IMR-90 (cell line): ENCODE measurements at regions of chr7 and their contacts with region 1.

Region 1: GRCh38 chr7:106659963-106660861 is 746 bp downstream of the CCDC71L start:
- DNase-seq: peak; percentile 74
- ATAC-seq: peak; percentile 60
- H3K4me3 ChIP-seq: peak overlapping the region; percentile 84
- H3K27ac ChIP-seq: peak overlapping the region; percentile 97
- H3K4me1 ChIP-seq: 0 out of 2 replicates have a peak, but pooled peaks cover 2% of the 10 kb centered on the region
- H3K27me3 ChIP-seq: no peaks in the 10 kb centered on the region
- CTCF ChIP-seq: peak; percentile 73
- POLR2A ChIP-seq: no peak
- RAD21 ChIP-seq: peak; percentile 78

Region 2: DNA sequence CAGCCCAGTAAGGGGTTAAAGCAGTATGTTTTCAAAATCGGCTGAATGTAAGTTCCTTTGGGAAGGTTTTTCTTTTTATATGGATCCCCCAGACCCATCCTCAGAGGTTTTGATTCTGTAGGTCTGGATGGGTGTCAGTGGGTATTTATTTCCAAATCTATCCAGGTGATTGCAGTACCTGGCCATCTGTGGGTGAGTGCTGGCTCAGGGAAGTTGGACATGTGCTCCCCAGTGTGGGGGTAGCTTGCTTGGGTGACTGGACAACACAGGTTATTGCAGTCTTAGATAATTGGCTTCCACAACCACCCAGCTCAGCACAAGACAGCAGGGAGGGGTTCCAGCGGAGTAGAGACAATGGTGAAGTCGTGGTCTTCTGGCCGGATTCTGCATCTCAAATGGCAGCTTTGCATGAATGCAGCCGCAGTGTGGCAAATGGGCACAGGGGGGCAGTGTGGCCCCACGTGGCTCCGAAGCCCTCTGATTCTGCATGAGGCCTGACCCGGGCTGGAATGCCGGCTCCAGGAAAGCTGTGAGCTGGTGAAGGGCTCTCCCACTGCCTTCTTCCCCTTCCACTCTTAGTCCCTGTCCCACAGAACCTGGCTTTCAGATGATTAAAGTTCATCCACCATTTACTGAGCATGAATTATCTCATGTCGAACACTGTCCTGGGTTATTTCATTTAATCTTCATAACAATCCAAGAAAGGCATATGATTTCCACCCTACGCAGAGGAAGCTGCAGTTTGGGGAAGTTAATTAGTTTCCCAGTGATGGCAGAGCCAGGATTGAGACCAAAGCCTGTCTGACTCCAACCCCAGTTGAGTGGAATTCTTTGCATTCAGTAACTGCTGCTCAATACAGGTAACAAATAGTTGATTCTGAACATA is 483.6 kb before region 1 on chr7:
- CTCF ChIA-PET with region 1: interaction called, 10 read pairs
- POLR2A ChIA-PET with region 1: no interaction called
- dilution Hi-C with region 1: no loop called
- in situ Hi-C with region 1: loop called (anchors 10 kb)
- intact Hi-C with region 1: loop called (anchors 1 kb)
- DNase-seq: peak; percentile 69
- ATAC-seq: peak; percentile 96
- H3K4me3 ChIP-seq: no peak overlapping the region
- H3K27ac ChIP-seq: no peak overlapping the region
- H3K4me1 ChIP-seq: peaks cover 5% of the 10 kb centered on the region; the same call in 1 of the 2 replicates
- H3K27me3 ChIP-seq: peaks cover 1% of the 10 kb centered on the region; the same call in 1 of the 2 replicates
- CTCF ChIP-seq: peak; percentile 98
- POLR2A ChIP-seq: peak; percentile 64
- RAD21 ChIP-seq: peak; percentile 99

Region 3: GRCh38 chr7:106425017-106425719 is 235.0 kb before region 1 on chr7:
- CTCF ChIA-PET with region 1: no interaction called
- POLR2A ChIA-PET with region 1: no interaction called
- dilution Hi-C with region 1: no loop called
- in situ Hi-C with region 1: no loop called
- intact Hi-C with region 1: loop called (anchors 1 kb)
- DNase-seq: peak; percentile 100
- ATAC-seq: peak; percentile 73
- H3K4me3 ChIP-seq: no peak overlapping the region
- H3K27ac ChIP-seq: peak overlapping the region; percentile 79
- H3K4me1 ChIP-seq: peaks cover 24% of the 10 kb centered on the region
- H3K27me3 ChIP-seq: no peaks in the 10 kb centered on the region
- CTCF ChIP-seq: no peak
- POLR2A ChIP-seq: no peak; the same call in 1 of the 2 replicates
- RAD21 ChIP-seq: peak; percentile 16

Region 4: DNA sequence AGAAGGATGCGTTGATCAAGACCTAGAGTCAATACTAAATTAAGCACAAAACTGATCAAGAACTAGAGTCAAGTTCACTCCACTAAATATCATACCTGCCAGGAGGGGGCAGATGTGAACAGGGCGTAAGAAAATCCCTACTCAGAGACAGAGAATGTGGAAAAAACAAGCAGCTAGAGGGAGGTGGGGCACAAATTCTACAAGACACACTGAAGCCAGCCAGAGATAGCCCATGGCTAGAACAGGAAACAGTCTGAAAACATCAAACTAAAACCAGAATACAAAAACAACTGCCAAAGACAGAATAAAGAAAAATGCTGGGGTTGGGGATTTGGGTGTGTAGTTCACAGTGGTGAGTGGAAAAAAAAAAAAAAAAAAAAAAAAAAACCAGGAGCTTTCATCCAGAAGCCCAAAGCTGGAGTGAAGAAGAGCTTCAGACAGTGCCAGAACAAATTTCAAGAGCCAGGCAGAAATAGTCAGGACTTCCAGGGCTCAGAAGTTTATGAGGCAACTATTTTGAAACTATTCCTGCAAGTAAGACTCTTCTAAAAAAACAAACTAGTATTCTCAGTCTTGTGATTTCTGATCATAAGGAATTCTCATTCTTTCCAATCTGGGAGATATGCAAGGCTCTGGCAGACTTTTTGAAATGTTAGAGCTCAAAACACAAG is 117.5 kb before region 1 on chr7:
- CTCF ChIA-PET with region 1: interaction called, 17 read pairs
- POLR2A ChIA-PET with region 1: interaction called, 3 read pairs
- dilution Hi-C with region 1: no loop called
- in situ Hi-C with region 1: no loop called
- intact Hi-C with region 1: loop called (anchors 1 kb)
- DNase-seq: peak; percentile 89
- ATAC-seq: peak; percentile 96
- H3K4me3 ChIP-seq: no peak overlapping the region
- H3K27ac ChIP-seq: peak overlapping the region; percentile 81; the same call in 1 of the 2 replicates
- H3K4me1 ChIP-seq: peaks cover 8% of the 10 kb centered on the region
- H3K27me3 ChIP-seq: no peaks in the 10 kb centered on the region
- CTCF ChIP-seq: peak; percentile 69
- POLR2A ChIP-seq: no peak
- RAD21 ChIP-seq: peak; percentile 77

Region 5: GRCh38 chr7:106793015-106793975 is 133.1 kb after region 1 on chr7:
- CTCF ChIA-PET with region 1: no interaction called
- POLR2A ChIA-PET with region 1: no interaction called
- dilution Hi-C with region 1: no loop called
- in situ Hi-C with region 1: no loop called
- intact Hi-C with region 1: loop called (anchors 1 kb)
- DNase-seq: peak; percentile 33
- ATAC-seq: peak; percentile 59
- H3K4me3 ChIP-seq: no peak overlapping the region
- H3K27ac ChIP-seq: no peak overlapping the region
- H3K4me1 ChIP-seq: peaks cover 9% of the 10 kb centered on the region; the same call in 1 of the 2 replicates
- H3K27me3 ChIP-seq: no peaks in the 10 kb centered on the region
- CTCF ChIP-seq: peak; percentile 57
- POLR2A ChIP-seq: no peak
- RAD21 ChIP-seq: peak; percentile 72

Region 6: GRCh38 chr7:107150375-107151073 is 490.3 kb after region 1 on chr7:
- CTCF ChIA-PET with region 1: no interaction called
- POLR2A ChIA-PET with region 1: no interaction called
- dilution Hi-C with region 1: no loop called
- in situ Hi-C with region 1: loop called (anchors 10 kb)
- intact Hi-C with region 1: loop called (anchors 5 kb)
- DNase-seq: peak; percentile 78
- ATAC-seq: peak; percentile 58; the same call in 1 of the 2 replicates
- H3K4me3 ChIP-seq: no peak overlapping the region
- H3K27ac ChIP-seq: no peak overlapping the region
- H3K4me1 ChIP-seq: peaks cover 6% of the 10 kb centered on the region
- H3K27me3 ChIP-seq: no peaks in the 10 kb centered on the region
- CTCF ChIP-seq: peak; percentile 74
- POLR2A ChIP-seq: no peak
- RAD21 ChIP-seq: peak; percentile 75